Activated T-helper 2 cell treated with anti-CD3 and anti-CD28 coated beads, Interferon-gamma antibody, Interleukin-2, Interleukin-4, amounts not matched to agents 10 μg/mL and 5 μg/mL and 100 μg/mL, durations not matched to agents 14 hours and 24 hours and 36 hours (primary cell): ENCODE measurements at regions of chr6 and their contacts with region 1.

Region 1: GRCh38 chr6:137657351-137658011 is 163.3 kb upstream of the OLIG3 start:
- DNase-seq: peak; percentile 34
- H3K4me3 Mint-ChIP-seq: no peak overlapping the region
- H3K27ac Mint-ChIP-seq: peak overlapping the region; percentile 65
- H3K4me1 Mint-ChIP-seq: peaks cover 32% of the 10 kb centered on the region
- H3K27me3 Mint-ChIP-seq: no peaks in the 10 kb centered on the region

Region 2: DNA sequence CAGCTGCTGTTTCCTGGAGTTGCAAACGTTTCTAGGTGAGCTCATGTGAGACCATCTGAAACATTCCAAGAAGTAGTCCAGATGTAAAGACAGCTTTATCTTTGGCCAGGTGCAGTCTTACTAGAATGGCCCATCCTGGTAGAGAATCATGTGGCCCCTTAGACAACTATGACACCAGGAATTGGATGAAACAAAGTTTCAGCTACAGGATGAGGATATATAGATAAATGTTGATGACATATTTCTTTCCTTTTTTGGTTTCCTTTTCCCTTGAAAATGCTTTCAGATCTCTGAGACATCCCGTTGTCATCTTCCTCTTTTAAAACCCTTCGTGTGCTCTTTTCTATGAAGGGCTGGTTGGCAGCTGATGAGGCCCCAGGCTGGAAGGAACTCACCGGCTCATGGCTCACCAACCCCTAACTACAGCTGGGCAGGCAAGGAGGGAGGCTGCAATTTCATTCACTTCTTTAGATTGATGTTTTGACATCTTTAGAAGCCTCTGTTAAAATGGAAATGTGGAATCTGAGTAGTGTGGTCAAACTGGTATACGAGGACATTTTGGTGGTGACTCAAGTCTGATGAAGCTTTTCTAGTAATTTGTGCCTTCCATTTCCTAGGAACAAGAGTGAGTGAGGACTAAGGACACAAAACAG is 41.7 kb after region 1 on chr6:
- intact Hi-C with region 1: loop called (anchors 1 kb)
- DNase-seq: no peak
- H3K4me3 Mint-ChIP-seq: peak overlapping the region; percentile 64
- H3K27ac Mint-ChIP-seq: peak overlapping the region; percentile 98
- H3K4me1 Mint-ChIP-seq: peaks cover 52% of the 10 kb centered on the region
- H3K27me3 Mint-ChIP-seq: no peaks in the 10 kb centered on the region

Region 3: DNA sequence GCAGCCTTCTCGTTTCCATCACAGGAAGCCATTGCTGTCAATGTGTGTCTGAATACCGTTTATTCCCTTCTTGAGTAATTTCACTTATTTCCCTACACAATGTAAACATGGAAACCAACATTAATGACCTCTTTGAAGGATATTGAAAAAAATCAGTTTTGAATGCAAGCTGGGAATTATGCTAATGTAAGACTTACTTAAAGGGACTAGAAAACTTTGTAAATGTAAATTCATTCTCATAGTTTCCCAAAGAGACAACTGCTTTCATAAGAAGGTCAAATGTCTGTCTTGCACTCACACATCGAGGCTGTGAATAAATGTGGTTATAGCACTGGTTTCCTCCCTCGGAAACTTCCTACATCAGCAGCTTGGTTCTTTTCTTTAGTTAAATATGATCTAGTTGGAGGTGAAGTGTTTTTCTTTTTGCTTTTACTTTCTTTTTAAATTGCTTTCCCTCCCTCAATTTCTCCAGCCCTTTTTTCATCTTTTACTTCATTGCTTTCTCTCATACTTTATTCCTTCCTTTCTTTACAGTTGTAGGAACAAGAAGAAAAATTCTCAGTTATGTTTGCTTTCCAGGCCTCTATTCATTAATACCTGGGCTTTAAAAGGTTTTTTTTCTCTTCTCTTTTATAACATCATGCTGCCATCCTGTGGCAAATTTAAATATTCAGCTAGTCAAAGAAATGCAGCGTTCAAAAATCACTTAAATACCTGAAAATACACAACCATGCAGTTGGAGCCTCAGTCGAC is 317.9 kb after region 1 on chr6:
- intact Hi-C with region 1: loop called (anchors 5 kb)
- DNase-seq: peak; percentile 26
- H3K4me3 Mint-ChIP-seq: peak overlapping the region; percentile 72
- H3K27ac Mint-ChIP-seq: peak overlapping the region; percentile 93
- H3K4me1 Mint-ChIP-seq: peaks cover 57% of the 10 kb centered on the region
- H3K27me3 Mint-ChIP-seq: no peaks in the 10 kb centered on the region